ENCODE measurements at regions of chr2 and their contacts with region 1.

Region 1: GRCh38 chr2:210252699-210253606 is 27.7 kb upstream of the ACADL start:
- DNase-seq: peak in 1 of 2 donors; percentile 28
- H3K4me3 ChIP-seq: no peak overlapping the region
- H3K27ac ChIP-seq: no peak overlapping the region
- H3K4me1 ChIP-seq: no peaks in the 10 kb centered on the region
- H3K27me3 ChIP-seq: no peaks in the 10 kb centered on the region
- CTCF ChIP-seq: no peak
- EP300 ChIP-seq: no peak
- POLR2A ChIP-seq: no peak

Region 2: DNA sequence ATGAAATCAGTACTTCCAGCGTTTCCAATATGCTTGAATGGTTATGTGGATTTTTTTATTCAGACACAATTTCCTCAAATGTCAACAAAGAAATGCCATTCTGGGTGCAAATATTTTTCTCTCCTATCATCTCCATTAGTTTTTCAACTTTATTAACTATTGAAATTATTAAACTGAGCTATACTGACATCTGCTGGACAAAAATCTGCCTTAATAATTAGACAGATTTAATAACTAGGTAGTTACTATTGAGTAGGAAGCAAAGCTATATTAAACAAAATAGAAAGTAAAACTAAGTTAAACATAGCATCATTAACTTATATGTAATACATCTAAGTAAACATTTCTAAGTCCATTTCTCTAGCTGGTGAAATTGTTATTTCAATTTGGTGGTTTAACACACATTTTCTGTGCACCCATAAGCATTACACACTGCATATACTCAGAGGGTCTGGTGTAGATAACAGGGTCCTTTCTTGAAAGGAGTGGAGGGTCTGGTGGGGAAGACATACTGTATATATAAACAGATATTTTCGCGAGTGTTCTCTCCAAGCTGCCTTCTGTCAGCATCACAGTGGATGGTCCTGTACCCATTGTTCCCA is 146.6 kb after region 1 on chr2:
- intact Hi-C with region 1: loop called (anchors 10 kb)
- DNase-seq: peak in 1 of 2 donors; percentile 30
- H3K4me3 ChIP-seq: no peak overlapping the region
- H3K27ac ChIP-seq: no peak overlapping the region
- H3K4me1 ChIP-seq: no peaks in the 10 kb centered on the region
- H3K27me3 ChIP-seq: no peaks in the 10 kb centered on the region
- CTCF ChIP-seq: peak in 4 of 7 experiments; percentile 13 to 41 (median 30)
- EP300 ChIP-seq: no peak
- POLR2A ChIP-seq: no peak

Region 3: GRCh38 chr2:210991107-210991506 is 738.2 kb after region 1 on chr2:
- intact Hi-C with region 1: no loop called
- DNase-seq: no peak
- H3K4me3 ChIP-seq: no peak overlapping the region
- H3K27ac ChIP-seq: no peak overlapping the region
- H3K4me1 ChIP-seq: no peaks in the 10 kb centered on the region
- H3K27me3 ChIP-seq: no peaks in the 10 kb centered on the region
- CTCF ChIP-seq: no peak
- EP300 ChIP-seq: no peak
- POLR2A ChIP-seq: no peak

Measured in stomach (tissue), 19 donors.